GM10248 (cell line): ENCODE measurements at regions of chr20 and their contacts with region 1.

Region 1: GRCh38 chr20:31723319-31724078 is 831 bp upstream of the BCL2L1 start:
- DNase-seq: peak; percentile 100
- CTCF ChIP-seq: peak; percentile 85

Region 2: DNA sequence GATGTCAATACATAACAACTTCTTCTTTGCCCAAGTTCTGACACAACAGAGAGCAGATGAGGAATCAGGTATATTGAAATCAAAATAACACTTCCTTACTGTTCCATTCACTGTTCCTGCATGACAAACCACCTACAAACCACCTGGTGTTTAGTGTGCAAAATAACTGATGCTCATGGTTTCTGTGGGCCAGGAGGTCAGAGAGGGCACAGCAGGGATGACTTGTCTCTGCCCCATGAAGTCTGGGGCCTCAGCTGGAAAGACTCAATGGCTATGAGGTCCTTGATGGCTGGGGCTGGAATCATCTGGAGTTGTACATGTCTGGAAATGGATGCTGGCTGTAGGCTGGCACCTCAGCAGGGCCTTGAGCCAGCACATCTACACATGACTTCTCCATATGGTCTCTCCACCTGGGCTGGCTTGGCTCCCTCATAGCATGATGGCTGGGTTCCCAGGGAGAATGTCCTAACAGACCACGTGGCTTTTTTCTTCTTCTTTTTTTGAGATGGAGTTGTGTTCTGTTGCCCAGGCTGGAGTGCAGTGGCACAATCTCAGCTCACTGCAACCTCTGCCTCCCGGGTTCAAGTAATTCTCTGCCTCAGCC is 93.2 kb before region 1 on chr20:
- CTCF ChIA-PET with region 1: interaction called, 114 read pairs
- POLR2A ChIA-PET with region 1: no interaction called
- DNase-seq: no peak
- CTCF ChIP-seq: no peak

Region 3: DNA sequence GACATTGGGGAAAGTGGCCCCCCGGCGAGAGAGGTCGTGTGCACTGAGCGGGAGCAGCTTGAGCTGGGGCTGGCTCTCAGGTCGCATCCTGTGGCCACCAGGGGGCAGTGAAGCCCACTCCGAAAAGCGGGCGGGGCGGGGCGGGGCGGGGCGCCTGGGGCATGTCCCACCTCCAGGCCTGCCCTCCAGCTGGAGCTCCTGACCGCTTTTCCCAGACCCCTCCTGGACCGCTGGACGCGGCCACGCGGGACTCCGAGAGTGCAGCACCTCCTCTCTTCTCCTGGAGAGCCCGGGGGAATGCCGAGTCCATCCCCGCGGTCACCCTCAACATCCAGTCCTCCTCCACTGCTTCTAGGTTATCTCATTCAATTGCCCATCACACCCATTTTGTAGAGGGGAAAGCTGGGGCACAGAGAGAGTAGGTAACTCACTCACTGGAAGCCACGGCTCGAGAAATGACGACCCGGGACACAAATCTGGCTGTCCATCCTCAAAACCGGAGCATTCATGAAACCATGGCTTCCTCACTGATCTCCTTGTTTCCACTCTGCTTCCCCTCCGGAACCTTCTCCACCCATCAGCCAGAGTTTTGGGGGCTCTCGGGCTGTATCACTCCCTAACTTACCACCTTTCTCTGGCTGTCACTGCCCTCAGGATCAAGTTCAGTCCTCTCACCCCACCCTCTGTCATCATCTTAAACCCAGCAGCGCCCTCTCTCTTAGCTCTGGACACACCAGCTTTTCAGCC is 61.7 kb before region 1 on chr20:
- CTCF ChIA-PET with region 1: interaction called, 429 read pairs
- POLR2A ChIA-PET with region 1: interaction called, 20 read pairs
- DNase-seq: peak; percentile 91
- CTCF ChIP-seq: peak; percentile 73

Region 4: DNA sequence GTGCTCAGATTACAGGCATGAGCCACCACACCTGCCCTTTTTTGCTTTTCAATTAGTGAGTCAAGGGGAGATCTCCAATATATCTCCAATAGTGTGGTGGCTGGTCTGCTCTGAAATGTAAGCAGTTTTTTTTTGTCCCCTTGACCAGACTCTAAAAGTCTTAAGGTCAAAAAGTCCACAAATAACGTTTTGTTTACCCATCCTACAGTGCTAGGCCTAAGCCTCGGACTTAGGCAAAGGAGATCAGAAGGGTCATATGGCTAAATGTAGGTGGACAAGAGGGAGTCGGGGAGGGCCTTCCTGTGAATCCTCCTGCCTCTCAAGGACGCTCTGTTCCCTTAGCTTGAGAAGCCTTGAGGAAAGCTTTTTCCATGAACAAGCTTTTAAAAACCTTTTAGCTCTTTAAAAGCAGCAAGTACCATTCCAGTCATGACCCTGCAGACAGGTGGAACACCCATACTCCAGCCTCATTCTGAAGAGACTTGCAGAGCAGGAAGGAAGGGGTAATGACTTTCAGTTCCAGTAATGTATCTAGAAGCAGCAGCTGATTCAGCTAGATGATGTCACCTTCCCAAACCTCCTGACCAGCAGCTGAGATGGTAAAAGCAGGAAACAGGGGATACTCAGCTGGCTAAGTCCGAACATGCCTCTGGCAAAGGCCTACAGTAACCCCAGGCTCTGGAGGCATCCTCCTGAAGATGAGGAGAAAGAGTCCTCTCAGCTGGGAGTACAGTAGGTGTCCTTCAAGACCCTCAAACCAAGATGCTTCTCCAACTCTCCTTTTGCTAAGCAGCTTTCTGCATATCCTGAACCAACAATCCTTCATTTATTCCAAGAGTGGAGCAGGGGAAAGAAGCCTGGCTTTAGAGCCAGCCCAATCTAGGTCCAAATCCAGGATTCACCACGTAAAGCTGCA is 24.4 kb before region 1 on chr20:
- CTCF ChIA-PET with region 1: interaction called, 94 read pairs
- POLR2A ChIA-PET with region 1: interaction called, 4 read pairs
- DNase-seq: peak; percentile 73
- CTCF ChIP-seq: no peak

Region 5: GRCh38 chr20:31738729-31739561 is 15.4 kb after region 1 on chr20 and contains the start of gene TPX2:
- CTCF ChIA-PET with region 1: interaction called, 95 read pairs
- POLR2A ChIA-PET with region 1: no interaction called
- DNase-seq: peak; percentile 97
- CTCF ChIP-seq: no peak